ENCODE measurements at regions of chr6 and their contacts with region 1.

Region 1: GRCh38 chr6:31665501-31666336 is at the start of gene CSNK2B:
- DNase-seq: peak; percentile 96 to 97 (median 96)
- H3K4me3 ChIP-seq: peak within 1 kb of the TSS; percentile 87 to 94 (median 90)
- H3K4me3 Mint-ChIP-seq: peak within 1 kb of the TSS; percentile 93 to 98
- H3K27ac ChIP-seq: peak within 1 kb of the TSS; percentile 93 to 95
- H3K27ac Mint-ChIP-seq: peak within 1 kb of the TSS; percentile 96 to 98 (median 98)
- H3K4me1 ChIP-seq: peaks cover 48 to 60% of the 10 kb centered on the region in 2 donors
- H3K4me1 Mint-ChIP-seq: peaks cover 53% of the 10 kb centered on the region
- H3K27me3 ChIP-seq: no peaks in the 10 kb centered on the region
- H3K27me3 Mint-ChIP-seq: peaks cover 0 to 1% (median 0%) of the 10 kb centered on the region in 3 donors
- CTCF ChIP-seq: no peak
- polyA plus RNA-seq, gene CSNK2B: 147 to 227 (median 195) TPM

Region 2: DNA sequence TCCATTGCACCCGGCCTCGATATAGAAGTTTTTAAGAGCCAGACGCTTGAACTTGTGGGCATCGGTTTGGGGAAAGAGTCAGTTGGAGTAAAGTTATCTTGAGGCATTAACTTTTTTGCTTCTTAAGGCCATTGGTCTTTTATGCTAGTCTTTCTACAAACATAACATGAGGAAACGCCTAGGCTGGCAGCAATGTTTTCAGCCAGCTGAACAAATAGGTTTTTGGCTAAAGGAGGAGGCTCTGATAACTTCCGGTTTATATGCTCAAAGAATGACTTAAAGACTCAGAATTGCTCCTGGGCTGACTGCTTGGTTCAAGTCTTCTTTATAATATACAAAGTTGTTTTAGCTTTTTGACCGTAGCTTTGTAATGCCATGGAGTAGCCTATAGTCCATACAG is 440.0 kb before region 1 on chr6:
- intact Hi-C with region 1: no loop called
- DNase-seq: no peak
- H3K4me3 ChIP-seq: no peak overlapping the region
- H3K4me3 Mint-ChIP-seq: no peak overlapping the region
- H3K27ac ChIP-seq: no peak overlapping the region
- H3K27ac Mint-ChIP-seq: no peak overlapping the region
- H3K4me1 ChIP-seq: peaks cover 5 to 6% of the 10 kb centered on the region in 2 donors
- H3K4me1 Mint-ChIP-seq: peaks cover 14% of the 10 kb centered on the region
- H3K27me3 ChIP-seq: no peaks in the 10 kb centered on the region
- H3K27me3 Mint-ChIP-seq: peaks cover 0 to 11% (median 0%) of the 10 kb centered on the region in 3 donors
- CTCF ChIP-seq: no peak

Region 3: DNA sequence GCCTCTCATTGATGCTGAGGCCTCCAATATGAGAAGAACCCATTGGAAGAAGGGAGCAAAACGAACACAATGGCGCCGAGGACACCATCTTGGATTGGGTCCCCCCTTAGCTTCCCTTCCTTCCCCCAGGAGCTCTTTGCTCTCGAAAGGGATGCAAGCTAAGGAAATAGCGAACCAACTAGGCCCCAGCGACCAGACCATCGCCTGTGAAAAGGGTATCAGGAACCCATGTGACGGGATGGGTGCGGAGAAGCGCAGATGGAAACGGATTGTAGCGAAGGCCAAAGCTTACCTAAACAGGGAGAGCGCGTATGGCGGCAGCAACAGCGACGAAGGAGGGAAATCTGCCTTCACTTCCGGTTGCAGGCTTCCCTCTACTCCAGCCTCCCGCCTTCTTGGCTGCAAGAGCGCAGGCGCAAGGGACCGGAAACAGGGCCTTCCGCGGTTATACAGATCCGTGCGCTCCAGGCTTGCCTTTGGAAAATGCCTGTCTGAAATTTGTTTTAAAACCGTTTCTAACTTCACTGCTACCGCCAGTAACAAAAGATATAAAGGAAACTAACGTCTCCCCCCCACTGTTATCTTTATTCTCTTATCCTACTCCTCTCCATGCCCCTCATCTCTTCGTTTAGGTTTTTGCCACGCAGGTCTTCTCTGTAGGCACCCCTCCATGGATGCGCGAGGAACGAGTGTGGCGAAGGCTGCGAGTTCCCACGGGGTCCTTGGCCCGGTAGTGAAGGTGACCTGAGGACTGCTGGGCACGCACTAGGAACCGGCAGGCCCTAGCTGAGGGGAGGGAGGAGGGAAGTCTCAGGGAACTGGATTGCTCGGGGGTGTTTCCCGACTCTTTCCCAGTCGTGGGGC is 123.8 kb before region 1 on chr6 and contains the start of gene DDX39B:
- intact Hi-C with region 1: loop called (anchors 5 kb)
- DNase-seq: peak; percentile 96 to 98 (median 97)
- H3K4me3 ChIP-seq: peak within 1 kb of the TSS; percentile 63 to 95 (median 85)
- H3K4me3 Mint-ChIP-seq: peak within 1 kb of the TSS; percentile 95 to 96
- H3K27ac ChIP-seq: peak within 1 kb of the TSS; percentile 96 to 97
- H3K27ac Mint-ChIP-seq: peak within 1 kb of the TSS; percentile 98 to 100 (median 99)
- H3K4me1 ChIP-seq: peaks cover 34 to 45% of the 10 kb centered on the region in 2 donors
- H3K4me1 Mint-ChIP-seq: peaks cover 40% of the 10 kb centered on the region
- H3K27me3 ChIP-seq: no peaks in the 10 kb centered on the region
- H3K27me3 Mint-ChIP-seq: no peaks in the 10 kb centered on the region
- CTCF ChIP-seq: no peak
- polyA plus RNA-seq, gene DDX39B: 64.1 to 1,059 (median 67.8) TPM

Region 4: DNA sequence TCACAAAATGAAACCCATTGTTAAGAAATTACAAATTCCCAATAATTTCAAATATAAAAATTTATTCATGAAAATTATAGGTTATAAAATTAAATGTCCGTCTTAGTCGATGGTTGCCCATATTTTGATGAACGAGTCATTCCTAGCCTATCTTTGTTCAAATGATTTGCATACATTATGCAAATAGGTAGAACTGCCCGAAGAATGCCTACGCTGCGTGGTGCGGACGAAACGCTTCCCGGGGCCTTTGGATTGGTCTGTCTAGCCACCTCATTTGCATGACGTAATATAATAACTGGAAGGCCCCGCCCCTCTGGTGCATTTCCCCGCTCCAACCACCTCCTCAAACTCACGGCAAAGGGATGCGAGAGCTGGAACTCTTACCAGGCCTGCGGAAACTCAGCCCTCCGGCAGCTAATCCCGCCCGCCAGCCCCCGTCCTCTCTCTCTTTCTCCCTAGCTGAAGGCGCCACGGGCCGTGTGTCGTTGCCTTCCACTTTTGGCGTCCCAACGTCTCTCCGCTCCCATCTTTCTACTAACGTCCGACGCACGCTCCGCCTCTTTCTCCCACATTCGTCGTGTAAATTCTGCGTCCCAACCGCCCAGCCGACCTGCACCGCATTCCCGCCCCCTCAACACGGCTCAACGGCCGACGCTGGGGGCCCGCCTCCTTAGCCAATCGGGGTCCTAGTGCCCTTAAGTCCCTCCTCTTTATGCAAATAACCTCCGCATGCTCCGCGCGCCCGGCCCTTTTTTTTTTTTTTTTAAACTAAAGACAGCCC is 45.7 kb before region 1 on chr6:
- intact Hi-C with region 1: loop called in 1 of 2 experiments (anchors 5 kb)
- DNase-seq: peak; percentile 96 to 99 (median 98)
- H3K4me3 ChIP-seq: peak overlapping the region; percentile 79 to 97 (median 87)
- H3K4me3 Mint-ChIP-seq: peak overlapping the region; percentile 89 to 96
- H3K27ac ChIP-seq: peak overlapping the region; percentile 95 to 99
- H3K27ac Mint-ChIP-seq: peak overlapping the region; percentile 98 to 100 (median 100)
- H3K4me1 ChIP-seq: peaks cover 49 to 63% of the 10 kb centered on the region in 2 donors
- H3K4me1 Mint-ChIP-seq: peaks cover 60% of the 10 kb centered on the region
- H3K27me3 ChIP-seq: no peaks in the 10 kb centered on the region
- H3K27me3 Mint-ChIP-seq: peaks cover 0 to 1% (median 0%) of the 10 kb centered on the region in 3 donors
- CTCF ChIP-seq: no peak

Region 5: GRCh38 chr6:31702819-31703522 is 37.3 kb after region 1 on chr6 and contains the start of gene ABHD16A:
- intact Hi-C with region 1: loop called in 1 of 2 experiments (anchors 5 kb)
- DNase-seq: peak; percentile 96 to 97 (median 96)
- H3K4me3 ChIP-seq: peak within 1 kb of the TSS; percentile 92 to 98 (median 97)
- H3K4me3 Mint-ChIP-seq: peak within 1 kb of the TSS; percentile 98 to 100
- H3K27ac ChIP-seq: peak within 1 kb of the TSS; percentile 94 to 96
- H3K27ac Mint-ChIP-seq: peak within 1 kb of the TSS; percentile 99 to 100 (median 99)
- H3K4me1 ChIP-seq: peaks cover 20 to 26% of the 10 kb centered on the region in 2 donors
- H3K4me1 Mint-ChIP-seq: peaks cover 23% of the 10 kb centered on the region
- H3K27me3 ChIP-seq: no peaks in the 10 kb centered on the region
- H3K27me3 Mint-ChIP-seq: peaks cover 0 to 1% (median 0%) of the 10 kb centered on the region in 3 donors
- CTCF ChIP-seq: no peak
- polyA plus RNA-seq, gene ABHD16A: 53.0 to 122 (median 56.0) TPM

Region 6: GRCh38 chr6:31958741-31959739 is 293.3 kb after region 1 on chr6 and contains the starts of genes NELFE and SKIC2:
- intact Hi-C with region 1: loop called (anchors 5 to 10 kb)
- DNase-seq: peak; percentile 99
- H3K4me3 ChIP-seq: peak within 1 kb of the TSS; percentile 91 to 100 (median 93)
- H3K4me3 Mint-ChIP-seq: peak within 1 kb of the TSS; percentile 91 to 97
- H3K27ac ChIP-seq: peak within 1 kb of the TSS; percentile 79 to 99
- H3K27ac Mint-ChIP-seq: peak within 1 kb of the TSS; percentile 97 to 99 (median 99)
- H3K4me1 ChIP-seq: peaks cover 17 to 22% of the 10 kb centered on the region in 2 donors
- H3K4me1 Mint-ChIP-seq: peaks cover 22% of the 10 kb centered on the region
- H3K27me3 ChIP-seq: no peaks in the 10 kb centered on the region
- H3K27me3 Mint-ChIP-seq: no peaks in the 10 kb centered on the region
- CTCF ChIP-seq: no peak
- polyA plus RNA-seq, gene NELFE: 48.8 to 74.4 (median 61.4) TPM
- polyA plus RNA-seq, gene SKIC2: 13.2 to 72.1 (median 13.2) TPM

Region 7: GRCh38 chr6:32108094-32108627 is 442.4 kb after region 1 on chr6:
- intact Hi-C with region 1: no loop called
- DNase-seq: no peak
- H3K4me3 ChIP-seq: no peak overlapping the region
- H3K4me3 Mint-ChIP-seq: no peak overlapping the region
- H3K27ac ChIP-seq: no peak overlapping the region
- H3K27ac Mint-ChIP-seq: no peak overlapping the region
- H3K4me1 ChIP-seq: no peaks in the 10 kb centered on the region
- H3K4me1 Mint-ChIP-seq: peaks cover 8% of the 10 kb centered on the region
- H3K27me3 ChIP-seq: peaks cover 3 to 21% of the 10 kb centered on the region in 2 donors
- H3K27me3 Mint-ChIP-seq: peaks cover 24 to 56% (median 42%) of the 10 kb centered on the region in 3 donors
- CTCF ChIP-seq: no peak